ENCODE measurements at regions of chr10 and their contacts with region 1.

Region 1: GRCh38 chr10:70363971-70364771 is 18.3 kb downstream of the LRRC20 start:
- DNase-seq: peak; percentile 89 to 92 (median 90)
- ATAC-seq: peak; percentile 95 to 97 (median 97)
- H3K4me3 ChIP-seq: no peak overlapping the region
- H3K27ac ChIP-seq: peak overlapping the region in 2 of 3 donors; percentile 11 to 22
- H3K4me1 ChIP-seq: peaks cover 0 to 15% (median 5%) of the 10 kb centered on the region in 4 donors
- H3K27me3 ChIP-seq: no peaks in the 10 kb centered on the region
- CTCF ChIP-seq: peak; percentile 91 to 96 (median 94)
- POLR2A ChIP-seq: no peak

Region 2: DNA sequence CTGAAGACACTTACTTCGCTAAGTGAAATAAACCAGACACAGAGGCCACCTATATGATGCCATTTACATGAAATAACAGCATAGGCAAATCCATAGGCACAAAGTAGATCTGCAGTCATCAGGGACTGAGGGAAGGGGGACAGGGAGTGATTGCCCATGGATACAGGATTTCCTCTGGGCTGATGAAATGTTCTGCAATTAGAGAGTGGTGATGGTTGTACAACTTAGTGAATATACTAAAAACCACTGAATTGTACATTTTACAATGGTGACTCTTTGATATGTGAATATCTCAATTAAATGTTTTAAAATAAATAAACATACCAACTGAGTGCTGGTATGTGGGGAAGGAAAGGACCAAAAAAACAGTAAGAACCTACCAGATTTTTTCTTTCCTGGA is 151.3 kb before region 1 on chr10:
- intact Hi-C with region 1: loop called in 1 of 2 experiments (anchors 10 kb)
- DNase-seq: no peak
- ATAC-seq: no peak
- H3K4me3 ChIP-seq: no peak overlapping the region
- H3K27ac ChIP-seq: no peak overlapping the region
- H3K4me1 ChIP-seq: no peaks in the 10 kb centered on the region
- H3K27me3 ChIP-seq: no peaks in the 10 kb centered on the region
- CTCF ChIP-seq: no peak
- POLR2A ChIP-seq: no peak

Region 3: GRCh38 chr10:70221030-70221429 is 143.1 kb before region 1 on chr10:
- intact Hi-C with region 1: loop called (anchors 5 to 10 kb)
- DNase-seq: no peak
- ATAC-seq: no peak
- H3K4me3 ChIP-seq: no peak overlapping the region
- H3K27ac ChIP-seq: no peak overlapping the region
- H3K4me1 ChIP-seq: peaks cover 0 to 17% (median 4%) of the 10 kb centered on the region in 4 donors
- H3K27me3 ChIP-seq: no peaks in the 10 kb centered on the region
- CTCF ChIP-seq: no peak
- POLR2A ChIP-seq: no peak